ENCODE measurements at regions of chr16 and their contacts with region 1.

Region 1: DNA sequence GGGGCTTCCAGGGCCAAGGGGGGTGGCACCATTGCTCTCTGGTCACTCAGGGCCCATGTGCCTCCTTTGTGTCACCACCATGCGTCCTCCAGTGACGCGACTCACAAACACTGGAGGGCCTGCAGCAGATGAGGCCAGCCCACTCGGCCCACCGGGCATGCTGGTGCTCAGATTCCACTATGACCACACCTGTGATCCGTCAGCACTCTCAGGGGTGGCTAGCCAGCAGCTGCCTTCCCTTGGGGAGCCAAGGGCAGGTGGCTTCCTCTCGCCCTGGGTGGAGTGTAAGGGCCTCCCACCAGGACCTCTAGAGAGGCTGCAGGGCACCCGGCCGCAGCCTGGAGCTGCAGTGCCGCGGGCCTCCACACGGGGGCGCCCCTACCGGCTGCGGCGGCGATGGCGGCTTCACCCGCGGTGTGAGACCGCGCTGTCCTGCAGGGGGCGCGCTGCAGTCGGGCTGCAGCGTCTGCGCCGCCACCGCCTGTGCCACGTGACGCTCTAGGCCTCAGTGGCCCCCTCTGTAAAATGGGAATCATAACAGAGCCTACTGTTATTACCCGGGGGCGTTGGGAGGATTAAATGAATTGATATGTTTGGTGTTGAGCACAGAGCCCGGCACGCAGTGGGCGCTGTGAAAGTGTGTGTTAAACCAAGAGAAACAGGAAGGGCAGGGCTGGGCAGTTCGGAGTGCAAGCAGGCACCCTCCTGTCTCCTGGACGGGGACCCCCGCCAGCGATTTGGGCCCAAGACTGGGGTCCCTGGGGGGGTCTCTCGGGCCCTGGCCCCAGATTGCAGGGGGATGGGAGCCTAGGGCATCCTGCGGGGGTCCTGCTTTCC is 192.4 kb upstream of the GSE1 start:
- DNase-seq: peak; percentile 70 to 78 (median 71)
- ATAC-seq: peak; percentile 57 to 73 (median 62)
- H3K4me3 ChIP-seq: no peak overlapping the region
- H3K27ac ChIP-seq: no peak overlapping the region
- H3K4me1 ChIP-seq: peaks cover 0 to 25% (median 10%) of the 10 kb centered on the region in 4 donors
- H3K27me3 ChIP-seq: no peaks in the 10 kb centered on the region
- CTCF ChIP-seq: peak in 3 of 4 donors; percentile 100
- POLR2A ChIP-seq: no peak

Region 2: GRCh38 chr16:85195900-85196772 is 224.6 kb before region 1 on chr16:
- intact Hi-C with region 1: no loop called
- DNase-seq: no peak
- ATAC-seq: peak in 1 of 4 donors; percentile 8
- H3K4me3 ChIP-seq: no peak overlapping the region
- H3K27ac ChIP-seq: no peak overlapping the region
- H3K4me1 ChIP-seq: peaks cover 0 to 15% (median 6%) of the 10 kb centered on the region in 4 donors
- H3K27me3 ChIP-seq: no peaks in the 10 kb centered on the region
- CTCF ChIP-seq: no peak
- POLR2A ChIP-seq: no peak

Region 3: GRCh38 chr16:85541980-85542900 is 121.5 kb after region 1 on chr16:
- intact Hi-C with region 1: loop called in 1 of 2 experiments (anchors 10 kb)
- DNase-seq: no peak
- ATAC-seq: no peak
- H3K4me3 ChIP-seq: no peak overlapping the region
- H3K27ac ChIP-seq: no peak overlapping the region
- H3K4me1 ChIP-seq: peaks cover 0 to 31% (median 8%) of the 10 kb centered on the region in 4 donors
- H3K27me3 ChIP-seq: no peaks in the 10 kb centered on the region
- CTCF ChIP-seq: no peak
- POLR2A ChIP-seq: no peak

Region 4: DNA sequence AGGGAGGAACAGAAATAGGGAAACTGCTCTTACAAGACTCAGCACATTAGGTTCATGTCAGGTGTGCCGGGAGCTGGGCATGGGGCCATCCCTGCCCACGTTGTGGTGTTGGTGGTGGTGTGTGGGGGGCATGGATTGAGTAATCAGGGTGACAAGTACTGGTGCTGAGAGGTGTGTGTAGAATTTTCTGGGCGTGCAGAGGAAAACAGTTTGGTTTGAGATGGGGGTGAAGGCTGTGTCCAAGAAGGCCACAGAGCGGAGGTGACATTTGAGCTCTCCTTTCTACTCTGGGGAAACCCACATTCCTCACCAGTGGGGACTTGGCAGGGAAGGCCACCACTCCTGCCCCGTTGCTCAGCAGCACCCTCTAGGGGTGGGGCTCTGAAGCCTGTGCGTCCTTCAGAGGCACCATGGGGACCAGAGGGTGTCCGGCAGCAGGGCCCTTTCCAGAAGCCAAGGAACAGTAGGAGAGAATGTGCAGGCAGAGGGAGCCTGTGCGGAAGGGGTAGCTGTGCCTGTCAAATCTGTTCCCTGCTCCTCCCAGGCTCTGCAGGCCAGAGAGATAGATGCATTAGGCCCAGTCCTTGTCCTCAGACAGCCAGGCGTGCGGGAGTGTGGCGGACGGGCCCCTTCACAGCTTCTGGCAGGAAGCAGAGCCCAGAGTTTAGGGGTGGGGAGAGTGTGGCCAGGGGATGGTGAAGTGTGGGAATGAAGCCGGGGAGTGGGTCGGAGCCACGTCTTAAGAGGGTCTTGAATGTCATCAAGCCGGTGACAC is 143.7 kb after region 1 on chr16:
- intact Hi-C with region 1: loop called in 1 of 2 experiments (anchors 5 kb)
- DNase-seq: peak; percentile 71 to 80 (median 79)
- ATAC-seq: peak; percentile 57 to 72 (median 64)
- H3K4me3 ChIP-seq: peak overlapping the region in 2 of 3 donors; percentile 36 to 40
- H3K27ac ChIP-seq: peak overlapping the region; percentile 53 to 89 (median 67)
- H3K4me1 ChIP-seq: peaks cover 0 to 75% (median 24%) of the 10 kb centered on the region in 4 donors
- H3K27me3 ChIP-seq: no peaks in the 10 kb centered on the region
- CTCF ChIP-seq: peak; percentile 75 to 88 (median 88)
- POLR2A ChIP-seq: no peak

Region 5: DNA sequence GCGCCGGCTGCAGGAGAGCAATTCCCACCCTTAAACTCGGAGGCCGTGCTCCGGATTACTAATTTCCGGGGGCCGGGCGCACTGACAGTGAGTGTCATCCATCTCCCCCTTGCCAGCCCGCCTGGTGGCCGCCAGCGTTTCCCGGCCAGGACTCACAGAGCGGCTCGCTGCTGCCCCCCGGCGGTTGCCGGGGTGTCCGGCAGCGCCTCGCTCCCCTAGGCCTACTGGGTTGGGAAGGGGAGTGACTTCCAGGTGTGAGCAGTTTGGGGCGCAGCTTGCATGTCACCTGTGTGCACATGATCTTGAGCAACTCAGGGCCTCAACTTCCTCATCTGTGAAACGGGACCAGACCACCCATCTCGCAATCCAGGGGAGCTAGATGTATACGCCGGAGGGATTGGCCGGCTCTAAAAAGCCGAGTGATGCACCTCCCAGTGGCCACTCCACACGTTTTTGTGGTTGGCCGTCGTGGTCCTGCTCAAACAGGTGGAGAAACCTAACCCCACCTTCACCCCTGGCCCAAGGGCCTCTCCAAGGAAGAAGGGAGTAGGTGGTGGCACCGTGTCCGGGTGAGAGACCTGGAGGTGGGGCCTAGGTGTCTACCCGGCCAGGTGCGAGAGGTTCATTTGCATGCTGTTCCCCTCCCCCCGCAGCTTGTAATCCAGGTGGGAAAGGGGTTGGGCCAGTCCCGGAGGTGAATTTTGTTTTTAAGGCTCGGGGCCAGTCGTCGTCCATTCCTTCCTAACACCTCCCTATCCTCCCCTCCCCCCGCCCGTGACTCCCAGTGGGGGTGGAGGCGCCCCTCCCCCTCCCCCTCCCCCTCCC is 190.0 kb after region 1 on chr16:
- intact Hi-C with region 1: loop called in 1 of 2 experiments (anchors 5 kb)
- DNase-seq: peak; percentile 88 to 91 (median 89)
- ATAC-seq: peak; percentile 48 to 59 (median 54)
- H3K4me3 ChIP-seq: peak overlapping the region; percentile 63 to 70 (median 67)
- H3K27ac ChIP-seq: peak overlapping the region; percentile 72 to 92 (median 87)
- H3K4me1 ChIP-seq: peaks cover 0 to 35% (median 15%) of the 10 kb centered on the region in 4 donors
- H3K27me3 ChIP-seq: no peaks in the 10 kb centered on the region
- CTCF ChIP-seq: peak; percentile 98 to 99 (median 99)
- POLR2A ChIP-seq: no peak

Measured in right lobe of liver (tissue), 6 donors.